ENCODE measurements at regions of chr9 and their contacts with region 1.

Region 1: DNA sequence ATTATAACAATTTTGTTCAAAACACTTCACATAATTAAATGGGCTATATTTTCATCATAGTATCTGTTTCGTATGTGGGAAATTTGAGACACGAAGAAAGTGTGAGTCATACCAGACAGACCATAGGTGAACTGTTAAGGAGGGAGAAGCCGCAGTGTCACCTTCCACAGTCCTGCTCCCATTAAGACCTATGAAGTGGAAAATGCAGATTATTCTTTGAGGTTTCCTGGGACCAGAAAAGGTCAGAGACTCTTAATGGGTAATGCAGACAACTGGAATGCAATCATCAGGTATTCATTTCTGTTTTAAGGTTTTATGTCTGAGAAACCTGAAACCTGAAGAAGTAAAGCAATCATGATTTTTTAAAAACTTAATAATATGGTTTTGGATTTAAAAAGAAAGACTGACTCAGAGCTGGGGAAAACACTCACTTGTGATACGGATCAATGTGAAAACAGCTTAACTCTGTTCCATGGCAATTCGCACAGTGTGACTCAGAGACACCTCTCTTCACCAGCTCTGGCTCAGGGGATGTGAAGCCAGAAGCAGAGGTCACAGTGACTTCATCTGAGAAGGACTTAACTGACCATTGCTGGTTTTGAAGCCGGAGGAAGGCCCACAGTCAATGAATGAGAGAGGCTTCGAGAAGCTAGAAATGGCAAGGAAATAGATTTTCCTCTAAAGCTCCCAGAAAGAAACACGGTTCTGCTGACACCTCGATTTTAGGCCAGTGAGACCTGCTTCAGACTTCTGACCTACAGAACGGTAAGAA is 17.2 kb upstream of the GCNT1 start:
- DNase-seq: peak; percentile 70
- ATAC-seq: peak; percentile 83
- H3K4me3 Mint-ChIP-seq: peak overlapping the region; percentile 80
- H3K27ac Mint-ChIP-seq: peak overlapping the region; percentile 96
- H3K4me1 Mint-ChIP-seq: peaks cover 51% of the 10 kb centered on the region
- H3K27me3 Mint-ChIP-seq: peaks cover 5% of the 10 kb centered on the region

Region 2: DNA sequence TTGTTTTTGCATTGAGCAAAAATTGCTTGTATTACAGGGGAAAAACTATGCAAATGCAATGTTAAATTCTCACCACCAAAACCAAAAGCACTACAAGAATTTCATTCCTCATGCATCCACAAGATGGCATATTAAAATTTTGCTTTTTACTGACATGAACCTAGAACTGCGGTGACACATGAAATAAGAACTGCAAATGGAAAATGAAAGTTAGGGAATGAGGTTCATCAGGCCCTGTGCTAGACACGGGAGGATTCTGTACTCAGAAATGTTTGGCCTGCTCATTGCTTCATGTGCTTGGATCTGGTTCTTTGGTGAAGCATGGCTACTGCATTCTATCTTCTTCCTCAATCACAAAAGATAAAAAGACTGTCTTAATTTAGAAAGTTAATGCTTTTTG is 38.4 kb before region 1 on chr9:
- CTCF ChIA-PET with region 1: interaction called, 5 read pairs
- POLR2A ChIA-PET with region 1: no interaction called
- intact Hi-C with region 1: loop called (anchors 1 kb)
- DNase-seq: peak; percentile 30
- ATAC-seq: peak; percentile 94
- H3K4me3 Mint-ChIP-seq: peak overlapping the region; percentile 16
- H3K27ac Mint-ChIP-seq: peak overlapping the region; percentile 62
- H3K4me1 Mint-ChIP-seq: peaks cover 11% of the 10 kb centered on the region
- H3K27me3 Mint-ChIP-seq: no peaks in the 10 kb centered on the region

Region 3: DNA sequence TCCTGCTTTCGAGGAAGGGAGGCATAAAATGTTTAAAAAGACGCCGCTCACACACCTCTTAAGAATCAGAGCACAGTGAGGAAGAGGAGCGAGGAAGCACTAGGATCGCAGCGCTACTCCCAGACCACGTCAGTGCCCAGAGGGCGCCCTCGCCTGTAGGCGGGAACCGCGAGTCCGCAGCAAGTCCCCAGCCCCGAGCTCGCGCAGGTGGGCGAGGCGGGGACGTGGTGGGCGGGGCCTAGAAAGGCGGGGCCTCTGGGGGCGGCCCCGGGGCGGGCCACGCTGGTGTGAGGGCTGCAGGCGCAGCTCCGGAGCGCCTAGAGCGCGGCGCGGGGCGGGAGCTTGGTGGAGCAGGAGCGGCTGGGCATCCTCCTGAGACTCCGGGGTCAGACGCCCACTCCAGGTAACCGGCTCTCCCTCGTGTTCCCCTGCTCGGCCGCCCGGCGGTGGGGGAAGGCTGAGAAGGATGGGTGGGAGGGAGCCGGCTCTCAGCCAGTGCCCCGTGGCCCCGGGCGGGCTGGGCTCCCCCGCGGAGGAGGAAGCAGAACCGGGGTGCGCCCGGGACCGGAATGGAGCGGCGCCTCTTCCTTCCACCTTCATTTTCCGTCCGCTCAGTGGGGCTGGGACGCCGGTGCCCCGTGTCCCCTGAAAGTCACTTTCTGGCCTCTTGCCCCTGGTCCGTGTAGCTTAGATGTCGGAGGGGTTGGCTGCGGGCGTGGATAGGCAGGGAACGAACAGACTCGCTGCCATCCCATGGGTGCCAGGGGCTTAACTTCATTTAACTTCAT is 17.4 kb after region 1 on chr9 and contains the start of gene GCNT1:
- CTCF ChIA-PET with region 1: interaction called, 4 read pairs
- POLR2A ChIA-PET with region 1: no interaction called
- intact Hi-C with region 1: loop called in 1 of 2 experiments (anchors 2 kb)
- DNase-seq: peak; percentile 95
- ATAC-seq: peak; percentile 96
- H3K4me3 Mint-ChIP-seq: peak within 1 kb of the TSS; percentile 85
- H3K27ac Mint-ChIP-seq: peak within 1 kb of the TSS; percentile 77
- H3K4me1 Mint-ChIP-seq: peaks cover 26% of the 10 kb centered on the region
- H3K27me3 Mint-ChIP-seq: no peaks in the 10 kb centered on the region
- total RNA-seq, gene GCNT1: 4.2 to 4.6 TPM

Region 4: GRCh38 chr9:76658535-76659231 is 216.9 kb after region 1 on chr9:
- CTCF ChIA-PET with region 1: interaction called, 10 read pairs
- POLR2A ChIA-PET with region 1: no interaction called
- intact Hi-C with region 1: no loop called
- DNase-seq: no peak
- ATAC-seq: peak; percentile 85
- H3K4me3 Mint-ChIP-seq: no peak overlapping the region
- H3K27ac Mint-ChIP-seq: no peak overlapping the region
- H3K4me1 Mint-ChIP-seq: peaks cover 16% of the 10 kb centered on the region
- H3K27me3 Mint-ChIP-seq: no peaks in the 10 kb centered on the region

Region 5: GRCh38 chr9:76987594-76988200 is 546.0 kb after region 1 on chr9:
- CTCF ChIA-PET with region 1: no interaction called
- POLR2A ChIA-PET with region 1: no interaction called
- intact Hi-C with region 1: loop called in 1 of 2 experiments (anchors 10 kb)
- DNase-seq: peak; percentile 22
- ATAC-seq: no peak
- H3K4me3 Mint-ChIP-seq: no peak overlapping the region
- H3K27ac Mint-ChIP-seq: no peak overlapping the region
- H3K4me1 Mint-ChIP-seq: no peaks in the 10 kb centered on the region
- H3K27me3 Mint-ChIP-seq: peaks cover 2% of the 10 kb centered on the region

Region 6: DNA sequence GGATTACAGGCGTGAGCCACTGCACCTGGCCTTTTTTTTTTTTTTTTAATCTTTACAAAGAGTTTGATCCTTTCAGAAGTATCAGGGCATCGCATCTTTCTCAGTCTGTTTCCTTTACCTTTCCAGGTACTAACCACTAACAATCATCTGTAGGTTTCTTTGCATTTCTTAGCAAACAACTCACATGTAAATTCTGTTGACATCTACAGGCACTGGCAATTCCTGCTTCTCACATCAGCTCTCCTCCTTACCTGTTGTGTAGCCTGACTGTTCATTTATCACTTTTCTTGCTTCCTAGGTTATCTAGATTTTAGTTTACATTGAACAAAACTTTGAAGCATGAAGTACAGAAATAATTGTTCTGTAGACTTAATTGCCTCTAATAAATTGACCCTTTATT is 708.1 kb after region 1 on chr9:
- CTCF ChIA-PET with region 1: no interaction called
- POLR2A ChIA-PET with region 1: no interaction called
- intact Hi-C with region 1: loop called (anchors 2 to 5 kb)
- DNase-seq: no peak
- ATAC-seq: no peak
- H3K4me3 Mint-ChIP-seq: no peak overlapping the region
- H3K27ac Mint-ChIP-seq: no peak overlapping the region
- H3K4me1 Mint-ChIP-seq: no peaks in the 10 kb centered on the region
- H3K27me3 Mint-ChIP-seq: peaks cover 6% of the 10 kb centered on the region

Measured in activated CD4-positive, alpha-beta T cell treated with anti-CD3 and anti-CD28 coated beads for 36 hours (primary cell).